OCI-LY7 (cell line): ENCODE measurements at regions of chr4 and their contacts with region 1.

Region 1: DNA sequence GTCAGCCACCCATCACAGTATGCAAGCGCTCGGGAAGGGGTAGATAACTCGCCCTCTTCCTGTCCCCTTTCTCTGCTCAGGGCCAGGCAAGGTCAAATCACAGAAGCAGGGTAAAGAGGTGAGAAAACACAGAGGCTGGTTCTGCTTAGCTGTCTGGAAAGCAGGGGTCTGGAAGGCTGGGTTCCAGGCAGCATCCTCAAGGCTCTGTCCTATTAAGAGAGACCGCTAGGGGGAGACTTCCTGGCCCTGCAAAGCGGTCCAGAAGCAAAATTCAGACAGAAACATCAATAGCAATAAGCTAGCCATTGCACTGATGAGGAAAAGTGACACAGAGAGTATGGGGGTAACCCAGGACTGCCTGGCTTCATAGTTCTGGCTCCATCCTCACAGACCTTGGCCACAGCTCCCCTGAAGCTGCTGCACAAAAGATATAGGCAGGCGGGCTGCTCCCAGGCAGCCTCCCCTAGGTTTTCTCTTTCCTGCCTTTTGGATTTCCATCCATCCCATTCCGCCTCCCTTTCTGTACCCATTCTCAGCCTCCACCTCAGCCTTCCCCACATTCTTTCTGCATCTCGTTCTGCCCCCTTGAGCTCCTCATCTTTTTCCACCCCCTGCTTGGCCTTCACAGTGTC is 308.5 kb downstream of the EVC2 start:
- DNase-seq: peak; percentile 23
- H3K4me3 ChIP-seq: no peak overlapping the region
- H3K27ac ChIP-seq: no peak overlapping the region
- H3K4me1 ChIP-seq: no peaks in the 10 kb centered on the region
- CTCF ChIP-seq: peak; percentile 80

Region 2: DNA sequence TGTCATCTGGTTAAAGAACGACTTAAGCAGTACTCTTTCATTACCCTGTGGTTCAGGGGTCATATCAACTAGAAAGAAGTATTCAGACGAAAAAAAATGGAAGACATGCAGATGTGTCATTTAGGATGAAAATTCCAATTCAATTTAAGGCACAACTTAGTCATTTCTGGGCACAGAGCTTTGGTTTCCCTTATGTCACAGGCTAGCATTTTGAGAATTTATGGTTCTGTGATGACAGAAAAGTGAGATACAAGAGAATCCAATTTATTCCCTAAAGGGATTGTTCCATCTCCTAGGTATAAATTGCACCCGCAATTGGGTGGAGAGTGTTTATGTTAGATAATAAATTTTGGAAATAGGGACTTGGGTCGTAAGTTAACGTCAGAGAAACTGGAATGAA is 42.0 kb before region 1 on chr4:
- CTCF ChIA-PET with region 1: no interaction called
- POLR2A ChIA-PET with region 1: no interaction called
- intact Hi-C with region 1: no loop called
- DNase-seq: no peak
- H3K4me3 ChIP-seq: no peak overlapping the region
- H3K27ac ChIP-seq: no peak overlapping the region
- H3K4me1 ChIP-seq: no peaks in the 10 kb centered on the region
- CTCF ChIP-seq: no peak

Region 3: GRCh38 chr4:5371415-5372190 is 28.3 kb before region 1 on chr4:
- CTCF ChIA-PET with region 1: no interaction called
- POLR2A ChIA-PET with region 1: no interaction called
- intact Hi-C with region 1: no loop called
- DNase-seq: no peak
- H3K4me3 ChIP-seq: no peak overlapping the region
- H3K27ac ChIP-seq: no peak overlapping the region
- H3K4me1 ChIP-seq: no peaks in the 10 kb centered on the region
- CTCF ChIP-seq: no peak

Region 4: DNA sequence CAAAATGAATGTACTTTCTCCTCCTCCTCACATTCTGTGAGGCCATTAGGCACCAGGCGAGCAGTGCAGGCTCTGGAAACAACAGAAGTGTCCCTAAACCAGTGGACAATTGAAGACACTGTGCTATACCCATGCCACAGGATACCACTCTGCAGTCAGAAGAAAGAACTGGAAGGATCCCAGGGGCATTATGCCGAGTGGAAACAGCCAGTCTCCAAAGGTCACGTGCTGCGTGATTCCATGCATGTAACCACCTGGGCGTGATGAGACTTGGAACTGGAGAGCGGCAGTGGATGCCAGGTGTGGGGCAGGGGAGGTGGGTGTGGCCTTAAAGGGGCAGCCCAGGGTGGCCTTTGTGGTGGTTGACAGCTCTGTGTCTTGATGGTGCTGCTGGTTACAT is 169.0 kb after region 1 on chr4:
- CTCF ChIA-PET with region 1: no interaction called
- POLR2A ChIA-PET with region 1: no interaction called
- intact Hi-C with region 1: no loop called
- DNase-seq: no peak
- H3K4me3 ChIP-seq: no peak overlapping the region
- H3K27ac ChIP-seq: no peak overlapping the region
- H3K4me1 ChIP-seq: no peaks in the 10 kb centered on the region
- CTCF ChIP-seq: no peak

Region 5: GRCh38 chr4:5791654-5792053 is 391.7 kb after region 1 on chr4:
- CTCF ChIA-PET with region 1: no interaction called
- POLR2A ChIA-PET with region 1: no interaction called
- intact Hi-C with region 1: loop called (anchors 5 kb)
- DNase-seq: no peak
- H3K4me3 ChIP-seq: no peak overlapping the region
- H3K27ac ChIP-seq: no peak overlapping the region
- H3K4me1 ChIP-seq: no peaks in the 10 kb centered on the region
- CTCF ChIP-seq: no peak

Region 6: DNA sequence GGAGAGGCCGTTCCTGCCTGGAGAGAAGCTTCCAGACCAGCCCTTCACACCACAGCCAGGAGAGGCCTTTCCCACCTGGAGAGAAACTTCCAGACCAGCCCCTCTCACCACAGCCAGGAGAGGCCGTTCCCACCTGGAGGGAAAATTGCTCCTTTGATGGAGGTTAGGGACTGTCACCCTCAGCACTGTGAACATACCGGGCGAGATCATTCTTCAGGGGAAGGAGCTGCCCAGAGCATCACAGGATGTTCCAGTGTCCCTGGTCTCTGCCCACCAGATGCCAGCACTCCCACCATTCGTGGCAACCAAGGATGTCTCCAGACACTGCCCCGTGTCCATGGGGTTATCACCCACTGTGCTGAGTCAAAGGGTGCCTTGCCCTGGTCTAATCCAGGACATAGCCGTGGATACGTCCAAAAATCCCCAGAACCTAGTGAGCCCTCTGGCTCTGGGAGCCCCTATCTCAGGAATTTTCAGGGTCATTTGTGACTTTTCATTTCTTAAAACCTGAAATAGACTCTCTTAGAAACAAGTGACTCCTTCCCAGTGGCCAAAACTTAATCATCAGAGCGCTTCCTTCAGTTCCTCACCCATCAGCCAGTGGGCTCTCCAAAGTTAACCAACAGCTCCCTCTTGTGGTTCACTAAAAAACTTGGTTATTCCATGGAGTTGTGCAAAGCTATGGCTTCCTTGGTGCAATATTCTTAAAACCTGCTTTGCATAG is 412.8 kb after region 1 on chr4:
- CTCF ChIA-PET with region 1: no interaction called
- POLR2A ChIA-PET with region 1: no interaction called
- intact Hi-C with region 1: loop called (anchors 2 kb)
- DNase-seq: peak; percentile 71
- H3K4me3 ChIP-seq: no peak overlapping the region
- H3K27ac ChIP-seq: no peak overlapping the region
- H3K4me1 ChIP-seq: no peaks in the 10 kb centered on the region
- CTCF ChIP-seq: peak; percentile 84